ENCODE measurements at regions of chr9 and their contacts with region 1.

Region 1: DNA sequence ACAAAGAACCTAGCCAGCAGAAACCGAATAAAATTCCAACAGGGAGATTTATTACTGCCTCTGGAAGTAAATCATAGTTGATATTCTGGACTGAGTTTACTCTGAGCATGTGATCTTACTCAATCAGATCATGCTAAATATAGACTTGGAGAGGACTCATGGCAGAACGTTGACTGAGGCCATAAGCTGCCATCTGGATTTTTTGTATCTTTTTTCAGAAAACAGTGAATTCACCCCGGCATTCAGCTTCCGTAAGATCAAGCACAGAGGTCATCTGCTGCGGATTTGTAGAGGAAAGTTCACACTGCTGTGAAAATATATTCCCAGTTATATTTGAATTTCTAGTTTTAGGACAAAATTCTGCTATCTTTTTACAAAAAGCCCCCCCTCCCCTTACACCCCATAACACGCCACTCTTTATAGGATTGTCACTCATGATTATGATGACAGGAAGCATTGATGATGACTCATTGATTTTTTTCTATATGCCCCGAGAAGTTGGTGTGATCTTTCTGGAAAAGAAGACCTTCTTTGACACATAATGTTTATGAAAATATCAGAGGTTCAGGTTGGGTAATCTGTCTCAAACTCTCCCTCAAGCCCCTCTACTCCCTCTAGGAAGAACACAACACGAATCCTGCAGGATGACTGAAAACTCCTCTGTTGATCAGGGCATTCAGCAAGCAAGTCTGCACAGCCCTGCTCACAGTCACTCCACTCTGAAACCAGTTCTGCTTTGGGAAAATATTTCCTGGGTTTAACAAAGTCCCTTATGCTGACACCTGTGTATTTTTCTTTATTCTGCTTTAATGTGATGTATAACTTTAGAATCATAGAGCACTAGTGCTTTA is 70.8 kb downstream of the NXNL2 start:
- DNase-seq: no peak
- H3K4me3 ChIP-seq: no peak overlapping the region
- H3K27ac ChIP-seq: peak overlapping the region; percentile 62 to 72
- H3K4me1 ChIP-seq: peaks cover 13% of the 10 kb centered on the region
- H3K27me3 ChIP-seq: no peaks in the 10 kb centered on the region
- CTCF ChIP-seq: no peak
- POLR2A ChIP-seq: no peak

Region 2: GRCh38 chr9:88411483-88411882 is 194.3 kb before region 1 on chr9:
- intact Hi-C with region 1: no loop called
- DNase-seq: no peak
- H3K4me3 ChIP-seq: no peak overlapping the region
- H3K27ac ChIP-seq: no peak overlapping the region
- H3K4me1 ChIP-seq: no peaks in the 10 kb centered on the region
- H3K27me3 ChIP-seq: no peaks in the 10 kb centered on the region
- CTCF ChIP-seq: no peak
- POLR2A ChIP-seq: no peak

Region 3: GRCh38 chr9:88651682-88652633 is 46.2 kb after region 1 on chr9:
- intact Hi-C with region 1: loop called (anchors 5 kb)
- DNase-seq: peak; percentile 29
- H3K4me3 ChIP-seq: no peak overlapping the region
- H3K27ac ChIP-seq: peak overlapping the region in 1 of 2 donors; percentile 19
- H3K4me1 ChIP-seq: no peaks in the 10 kb centered on the region
- H3K27me3 ChIP-seq: no peaks in the 10 kb centered on the region
- CTCF ChIP-seq: no peak
- POLR2A ChIP-seq: no peak

Region 4: GRCh38 chr9:88814577-88814976 is 208.8 kb after region 1 on chr9:
- intact Hi-C with region 1: loop called (anchors 10 kb)
- DNase-seq: no peak
- H3K4me3 ChIP-seq: no peak overlapping the region
- H3K27ac ChIP-seq: no peak overlapping the region
- H3K4me1 ChIP-seq: no peaks in the 10 kb centered on the region
- H3K27me3 ChIP-seq: no peaks in the 10 kb centered on the region
- CTCF ChIP-seq: no peak
- POLR2A ChIP-seq: no peak

Measured in prostate gland (tissue), 2 donors.